Panc1 (cell line): ENCODE measurements at regions of chr3 and their contacts with region 1.

Region 1: DNA sequence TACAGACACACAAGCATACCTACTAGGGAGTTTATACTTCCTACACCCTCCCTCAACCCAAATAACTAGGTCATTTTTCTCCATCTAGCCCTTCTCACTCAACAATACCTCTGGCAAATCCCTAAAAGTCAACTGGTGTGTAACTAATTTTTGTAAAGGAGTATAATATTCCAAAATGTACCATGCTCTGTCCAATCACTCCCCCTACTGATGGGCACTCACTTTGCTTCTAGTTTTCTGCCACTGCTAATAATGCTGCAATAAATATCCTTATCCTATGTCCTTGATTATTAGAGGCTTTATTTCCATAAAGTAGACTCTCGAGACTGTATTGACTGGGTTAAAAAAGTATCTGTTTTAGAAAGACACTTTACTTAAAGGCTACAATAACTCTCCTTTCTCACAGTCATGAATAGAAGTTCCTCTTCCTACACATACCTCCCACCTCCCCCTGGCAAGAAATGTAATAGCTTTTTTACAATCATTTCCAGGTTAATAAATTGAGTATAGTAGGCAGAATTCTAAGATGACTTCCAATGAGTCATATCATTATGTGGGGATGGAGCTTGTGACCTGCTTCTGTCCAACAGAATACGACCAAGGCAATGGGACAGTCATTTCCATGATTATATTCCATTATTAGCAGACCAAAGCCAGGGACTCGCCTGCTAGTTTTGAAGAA is 30.0 kb downstream of the SHQ1 start:
- DNase-seq: peak; percentile 2
- ATAC-seq: no peak
- H3K4me3 ChIP-seq: no peak overlapping the region
- H3K27ac ChIP-seq: no peak overlapping the region
- H3K4me1 ChIP-seq: no peaks in the 10 kb centered on the region
- H3K27me3 ChIP-seq: no peaks in the 10 kb centered on the region
- CTCF ChIP-seq: peak; percentile 31; the same call in 1 of the 2 replicates

Region 2: DNA sequence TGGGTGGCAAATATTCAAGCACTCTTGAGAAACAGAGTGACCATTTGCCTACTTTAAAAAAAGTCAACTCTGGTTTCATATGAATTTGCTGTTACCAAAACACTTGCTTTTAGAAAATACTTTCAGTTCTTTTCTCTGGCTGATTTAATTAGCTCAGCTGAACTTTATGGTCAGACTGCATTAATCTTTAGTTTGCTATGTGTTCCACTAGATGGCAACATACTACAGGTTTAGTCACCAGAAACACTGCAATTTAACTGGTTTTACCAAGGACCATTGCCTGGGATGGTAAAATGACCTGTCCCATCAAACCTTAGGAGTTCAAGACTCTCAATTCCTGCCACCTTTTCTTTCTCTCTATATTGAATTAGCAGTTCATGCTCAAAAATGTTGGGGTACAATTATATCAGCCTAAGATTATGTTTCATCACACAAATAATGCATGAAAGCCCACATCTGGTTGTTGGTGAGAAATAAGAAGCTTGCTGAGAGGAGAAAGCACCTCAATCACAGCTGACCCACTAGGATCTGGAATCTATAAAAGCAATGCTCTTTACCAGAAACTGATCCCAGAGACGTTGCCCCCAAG is 1107.2 kb before region 1 on chr3:
- CTCF ChIA-PET with region 1: no interaction called
- POLR2A ChIA-PET with region 1: no interaction called
- in situ Hi-C with region 1: no loop called
- intact Hi-C with region 1: loop called (anchors 5 kb)
- DNase-seq: peak; percentile 27
- ATAC-seq: 0 out of 2 replicates have a peak, but pooled peaks have one; percentile 77
- H3K4me3 ChIP-seq: no peak overlapping the region
- H3K27ac ChIP-seq: no peak overlapping the region
- H3K4me1 ChIP-seq: no peaks in the 10 kb centered on the region
- H3K27me3 ChIP-seq: no peaks in the 10 kb centered on the region
- CTCF ChIP-seq: peak; percentile 57; the same call in 1 of the 2 replicates

Region 3: GRCh38 chr3:71875461-71875947 is 942.7 kb before region 1 on chr3:
- CTCF ChIA-PET with region 1: no interaction called
- POLR2A ChIA-PET with region 1: no interaction called
- in situ Hi-C with region 1: no loop called
- intact Hi-C with region 1: loop called (anchors 10 kb)
- DNase-seq: peak; percentile 24
- ATAC-seq: peak; percentile 90
- H3K4me3 ChIP-seq: no peak overlapping the region
- H3K27ac ChIP-seq: no peak overlapping the region
- H3K4me1 ChIP-seq: no peaks in the 10 kb centered on the region
- H3K27me3 ChIP-seq: 0 out of 2 replicates have a peak, but pooled peaks cover 2% of the 10 kb centered on the region
- CTCF ChIP-seq: peak; percentile 83